Activated CD4-positive, alpha-beta memory T cell treated with anti-CD3 and anti-CD28 coated beads for 36 hours (primary cell): ENCODE measurements at regions of chr1 and their contacts with region 1.

Region 1: GRCh38 chr1:184621260-184621659 is 133.4 kb downstream of the EDEM3 start:
- DNase-seq: no peak
- H3K4me3 Mint-ChIP-seq: no peak overlapping the region
- H3K27ac Mint-ChIP-seq: no peak overlapping the region
- H3K4me1 Mint-ChIP-seq: no peaks in the 10 kb centered on the region
- H3K27me3 Mint-ChIP-seq: peaks cover 2% of the 10 kb centered on the region

Region 2: GRCh38 chr1:184588701-184589100 is 32.6 kb before region 1 on chr1:
- CTCF ChIA-PET with region 1: no interaction called
- POLR2A ChIA-PET with region 1: no interaction called
- intact Hi-C with region 1: loop called (anchors 1 kb)
- DNase-seq: no peak
- H3K4me3 Mint-ChIP-seq: no peak overlapping the region
- H3K27ac Mint-ChIP-seq: no peak overlapping the region
- H3K4me1 Mint-ChIP-seq: no peaks in the 10 kb centered on the region
- H3K27me3 Mint-ChIP-seq: peaks cover 10% of the 10 kb centered on the region

Region 3: DNA sequence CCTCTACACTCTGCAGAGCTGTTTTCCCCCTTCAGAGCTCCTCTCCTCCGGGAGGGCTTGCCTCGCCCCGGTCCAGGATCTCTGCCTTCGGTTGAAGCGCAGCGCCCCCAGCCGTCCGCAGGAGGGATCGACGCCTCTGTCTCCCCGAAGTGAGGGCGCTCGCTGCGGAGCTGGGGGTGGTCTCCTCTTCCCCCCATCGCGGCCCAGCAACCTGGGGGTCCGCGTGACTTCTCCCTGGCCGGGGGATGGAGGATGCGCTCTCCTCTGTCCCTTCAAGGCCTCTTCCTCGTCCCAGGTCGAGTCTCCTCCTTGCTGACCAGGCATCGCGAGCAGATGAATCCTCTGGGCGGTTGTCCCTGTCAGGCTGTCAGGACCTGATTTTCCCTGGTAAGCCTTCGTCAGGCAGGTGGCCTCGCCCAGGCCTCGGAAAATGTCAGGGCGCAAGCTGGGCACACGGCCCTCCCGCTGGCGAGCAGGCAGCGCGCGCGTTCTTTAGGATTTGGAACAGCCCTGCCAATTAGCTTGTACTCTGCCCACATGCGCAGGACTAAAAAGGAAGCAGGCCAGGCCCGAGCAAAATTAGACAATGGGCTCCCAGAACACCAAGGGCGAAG is 42.9 kb after region 1 on chr1:
- CTCF ChIA-PET with region 1: no interaction called
- POLR2A ChIA-PET with region 1: no interaction called
- intact Hi-C with region 1: no loop called
- DNase-seq: peak; percentile 63
- H3K4me3 Mint-ChIP-seq: no peak overlapping the region
- H3K27ac Mint-ChIP-seq: no peak overlapping the region
- H3K4me1 Mint-ChIP-seq: peaks cover 3% of the 10 kb centered on the region
- H3K27me3 Mint-ChIP-seq: peaks cover 17% of the 10 kb centered on the region

Region 4: GRCh38 chr1:185393815-185394214 is 772.6 kb after region 1 on chr1:
- CTCF ChIA-PET with region 1: no interaction called
- POLR2A ChIA-PET with region 1: no interaction called
- intact Hi-C with region 1: no loop called
- DNase-seq: no peak
- H3K4me3 Mint-ChIP-seq: no peak overlapping the region
- H3K27ac Mint-ChIP-seq: no peak overlapping the region
- H3K4me1 Mint-ChIP-seq: peaks cover 2% of the 10 kb centered on the region
- H3K27me3 Mint-ChIP-seq: no peaks in the 10 kb centered on the region